ENCODE measurements at regions of chr3 and their contacts with region 1.

Region 1: DNA sequence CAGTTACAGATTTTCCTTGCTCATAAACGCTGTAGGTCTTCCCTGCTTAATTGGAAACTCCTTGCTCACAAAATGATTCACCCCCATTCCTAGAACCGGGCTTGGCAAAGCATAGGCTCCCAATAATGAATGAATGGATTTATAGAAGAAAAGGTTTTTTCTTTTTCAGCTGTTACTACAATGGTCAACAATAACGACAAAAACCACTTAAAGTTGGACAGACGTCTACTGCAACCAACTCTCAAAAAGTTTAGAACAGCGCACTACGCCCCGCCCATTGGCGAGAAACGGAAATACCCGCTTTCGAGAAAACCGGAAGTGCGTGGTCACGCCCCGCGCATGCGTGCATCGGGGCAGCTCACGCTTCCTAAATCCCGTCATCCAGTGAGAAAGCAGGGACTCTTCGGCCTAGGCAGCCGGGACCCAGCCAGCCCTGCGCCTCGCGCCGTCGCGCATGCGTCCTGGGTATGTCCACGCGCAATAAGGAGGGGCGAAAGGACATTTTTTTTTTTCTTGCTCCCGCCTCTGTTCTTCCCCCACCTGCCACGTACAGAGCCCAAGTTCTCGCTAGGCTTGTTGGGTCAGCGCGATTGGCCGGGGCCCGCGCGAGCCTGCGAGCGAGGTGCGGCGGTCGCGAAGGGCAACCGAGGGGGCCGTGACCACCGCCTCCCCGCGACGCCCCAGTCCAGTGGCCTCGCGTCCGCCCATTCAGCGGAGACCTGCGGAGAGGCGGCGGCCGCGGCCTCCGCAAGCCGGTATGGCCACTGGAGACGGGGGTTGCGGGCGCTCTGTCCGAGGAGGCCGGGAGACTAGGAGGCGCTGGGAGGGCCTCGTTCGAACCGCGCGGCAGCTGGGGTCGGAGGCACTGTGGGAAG is at the start of gene TFG:
- DNase-seq: peak; percentile 98
- H3K4me3 ChIP-seq: peak within 1 kb of the TSS; percentile 88
- H3K4me3 Mint-ChIP-seq: peak within 1 kb of the TSS; percentile 80
- H3K27ac Mint-ChIP-seq: peak within 1 kb of the TSS; percentile 98
- H3K4me1 ChIP-seq: peaks cover 21% of the 10 kb centered on the region
- H3K4me1 Mint-ChIP-seq: peaks cover 31% of the 10 kb centered on the region
- H3K27me3 ChIP-seq: no peaks in the 10 kb centered on the region
- H3K27me3 Mint-ChIP-seq: peaks cover 4% of the 10 kb centered on the region
- CTCF ChIP-seq: no peak
- total RNA-seq, gene TFG: 128 and 138 TPM in 2 replicates

Region 2: GRCh38 chr3:100634493-100635272 is 74.5 kb before region 1 on chr3:
- CTCF ChIA-PET with region 1: interaction called, 4 read pairs
- POLR2A ChIA-PET with region 1: interaction called, 4 read pairs
- intact Hi-C with region 1: loop called (anchors 1 kb)
- DNase-seq: peak; percentile 80 to 84
- H3K4me3 ChIP-seq: 0 out of 2 replicates have a peak overlapping the region, but pooled peaks have one; percentile 2
- H3K4me3 Mint-ChIP-seq: peak overlapping the region; percentile 69
- H3K27ac Mint-ChIP-seq: peak overlapping the region; percentile 63
- H3K4me1 ChIP-seq: peaks cover 35% of the 10 kb centered on the region
- H3K4me1 Mint-ChIP-seq: peaks cover 12% of the 10 kb centered on the region
- H3K27me3 ChIP-seq: no peaks in the 10 kb centered on the region
- H3K27me3 Mint-ChIP-seq: no peaks in the 10 kb centered on the region
- CTCF ChIP-seq: no peak

Region 3: DNA sequence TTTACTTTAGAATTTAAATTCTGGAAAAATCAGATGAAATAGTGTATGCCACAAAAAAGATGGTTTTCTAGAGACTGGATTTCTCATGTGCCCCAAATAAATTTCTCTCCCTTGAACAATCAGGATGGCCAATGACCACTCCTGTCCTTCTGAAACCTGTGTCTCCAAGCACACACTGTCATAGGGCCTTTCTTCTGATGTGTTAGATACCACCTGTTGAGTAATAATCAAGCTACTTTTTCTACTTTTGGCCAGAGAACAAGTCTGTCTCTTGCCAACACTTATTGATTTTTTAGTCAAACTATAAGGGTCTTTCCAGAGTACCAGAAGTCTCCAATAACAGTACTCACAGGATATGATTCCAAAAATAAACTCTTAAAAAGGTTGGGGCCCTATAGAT is 16.0 kb before region 1 on chr3:
- CTCF ChIA-PET with region 1: no interaction called
- POLR2A ChIA-PET with region 1: no interaction called
- intact Hi-C with region 1: no loop called
- DNase-seq: no peak
- H3K4me3 ChIP-seq: no peak overlapping the region
- H3K4me3 Mint-ChIP-seq: no peak overlapping the region
- H3K27ac Mint-ChIP-seq: no peak overlapping the region
- H3K4me1 ChIP-seq: no peaks in the 10 kb centered on the region
- H3K4me1 Mint-ChIP-seq: peaks cover 6% of the 10 kb centered on the region
- H3K27me3 ChIP-seq: no peaks in the 10 kb centered on the region
- H3K27me3 Mint-ChIP-seq: peaks cover 2% of the 10 kb centered on the region
- CTCF ChIP-seq: no peak

Measured in Caco-2 (cell line).